ENCODE measurements at regions of chr5 and their contacts with region 1.

Region 1: GRCh38 chr5:61805101-61805500 is 473.0 kb downstream of the ZSWIM6 start:
- DNase-seq: peak; percentile 21 to 43
- H3K4me3 ChIP-seq: no peak overlapping the region
- H3K27ac ChIP-seq: no peak overlapping the region
- H3K4me1 ChIP-seq: no peaks in the 10 kb centered on the region
- H3K27me3 ChIP-seq: peaks cover 36% of the 10 kb centered on the region
- CTCF ChIP-seq: no peak

Region 2: GRCh38 chr5:61673007-61673735 is 131.9 kb before region 1 on chr5:
- CTCF ChIA-PET with region 1: no interaction called
- POLR2A ChIA-PET with region 1: no interaction called
- intact Hi-C with region 1: loop called (anchors 10 kb)
- DNase-seq: peak; percentile 52 to 68
- H3K4me3 ChIP-seq: no peak overlapping the region
- H3K27ac ChIP-seq: no peak overlapping the region
- H3K4me1 ChIP-seq: no peaks in the 10 kb centered on the region; the same call in 1 of the 2 replicates
- H3K27me3 ChIP-seq: peaks cover 6% of the 10 kb centered on the region; the same call in 1 of the 2 replicates
- CTCF ChIP-seq: no peak